ENCODE measurements at regions of chr16 and their contacts with region 1.

Region 1: DNA sequence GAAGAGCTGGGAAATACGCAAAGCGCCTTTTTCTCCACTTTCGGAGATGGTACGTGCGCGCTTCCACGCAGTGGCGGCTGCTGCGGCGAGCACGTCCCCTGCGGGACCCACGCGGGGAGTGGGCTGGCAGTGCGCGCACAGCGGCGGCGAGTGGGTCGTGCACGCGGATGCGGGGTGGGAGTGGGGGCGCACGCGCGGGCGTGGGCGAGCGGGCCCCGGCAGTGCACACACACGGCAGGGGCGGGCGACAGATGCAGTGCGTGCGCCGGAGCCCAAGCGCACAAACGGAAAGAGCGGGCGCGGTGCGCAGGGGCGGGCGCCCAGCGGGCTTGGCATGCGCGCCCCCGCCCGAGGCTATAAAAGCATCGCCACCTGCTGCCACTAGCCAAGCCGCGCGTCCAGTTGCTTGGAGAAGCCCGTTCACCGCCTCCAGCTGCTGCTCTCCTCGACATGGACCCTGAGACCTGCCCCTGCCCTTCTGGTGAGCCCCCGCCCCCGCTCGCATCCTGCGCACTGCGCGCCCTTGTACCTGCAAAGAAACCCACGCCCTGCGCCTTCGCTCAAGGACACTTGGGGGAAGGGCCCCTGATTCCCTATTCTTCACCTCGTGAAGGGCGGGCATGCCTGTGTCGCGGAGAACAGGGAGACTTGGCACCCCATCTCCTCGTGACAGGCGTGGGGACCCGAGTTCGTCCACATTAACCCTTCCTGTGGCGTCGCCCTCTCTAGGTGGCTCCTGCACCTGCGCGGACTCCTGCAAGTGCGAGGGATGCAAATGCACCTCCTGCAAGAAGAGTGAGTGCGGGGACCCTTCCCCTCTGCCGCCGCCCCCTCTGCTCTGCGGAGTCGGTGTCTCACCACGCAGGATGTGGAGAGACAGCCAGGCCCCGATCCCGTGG is at the start of gene MT3:
- DNase-seq: peak; percentile 66 to 95 (median 88)

Region 2: GRCh38 chr16:56513972-56514371 is 75.4 kb before region 1 on chr16:
- intact Hi-C with region 1: loop called (anchors 5 kb)
- DNase-seq: peak in 40 of 42 donors; percentile 11 to 87 (median 68)

Region 3: GRCh38 chr16:56519459-56520250 is 69.7 kb before region 1 on chr16 and contains the start of gene BBS2:
- intact Hi-C with region 1: loop called (anchors 5 kb)
- DNase-seq: peak; percentile 81 to 97 (median 92)

Region 4: DNA sequence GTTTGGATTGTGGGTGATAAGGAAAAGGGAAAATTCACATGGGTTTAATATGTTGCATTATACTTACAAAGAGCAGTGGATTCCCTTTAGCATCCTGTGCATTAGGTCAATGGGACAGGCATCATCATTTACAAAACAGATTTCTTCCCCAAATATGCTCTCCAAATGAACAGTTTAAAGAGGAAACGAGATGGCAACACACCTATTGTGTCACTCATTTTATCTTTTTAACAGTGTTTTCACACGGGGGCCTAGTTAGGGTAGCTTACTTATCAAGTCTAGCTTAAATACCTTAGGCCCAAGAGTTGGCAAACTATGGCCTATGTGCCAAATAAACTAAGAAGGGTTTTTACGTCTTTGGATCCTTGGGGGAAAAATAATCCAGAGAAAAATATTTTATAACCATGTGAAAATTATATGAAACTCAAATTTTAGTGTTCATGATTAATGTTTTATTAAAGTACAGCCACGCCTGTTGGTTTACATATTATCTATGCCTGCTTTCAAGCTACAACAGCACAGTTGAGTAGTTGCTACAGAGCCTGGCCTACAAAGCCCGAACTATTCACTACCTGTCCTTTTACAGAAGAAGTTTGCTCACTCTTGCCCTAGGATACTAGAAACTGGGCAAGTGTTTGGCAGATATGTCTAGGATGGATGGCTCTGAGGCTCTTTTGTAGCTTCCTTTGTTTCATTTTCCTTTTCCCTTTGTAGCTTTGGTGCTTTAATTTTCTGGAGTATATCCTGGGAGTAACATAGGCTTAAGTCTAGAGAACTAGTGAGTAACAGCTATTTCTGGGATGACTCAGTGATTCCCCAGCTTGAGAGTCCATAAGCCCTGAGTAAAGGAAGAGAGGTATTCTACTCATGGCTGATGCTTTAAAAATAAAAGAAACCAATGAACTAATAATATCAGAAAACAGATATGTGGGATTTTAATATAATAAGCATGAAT is 152.9 kb after region 1 on chr16:
- intact Hi-C with region 1: no loop called
- DNase-seq: no peak

Measured in head of caudate nucleus (tissue), 42 donors.